ENCODE measurements at regions of chr17 and their contacts with region 1.

Region 1: DNA sequence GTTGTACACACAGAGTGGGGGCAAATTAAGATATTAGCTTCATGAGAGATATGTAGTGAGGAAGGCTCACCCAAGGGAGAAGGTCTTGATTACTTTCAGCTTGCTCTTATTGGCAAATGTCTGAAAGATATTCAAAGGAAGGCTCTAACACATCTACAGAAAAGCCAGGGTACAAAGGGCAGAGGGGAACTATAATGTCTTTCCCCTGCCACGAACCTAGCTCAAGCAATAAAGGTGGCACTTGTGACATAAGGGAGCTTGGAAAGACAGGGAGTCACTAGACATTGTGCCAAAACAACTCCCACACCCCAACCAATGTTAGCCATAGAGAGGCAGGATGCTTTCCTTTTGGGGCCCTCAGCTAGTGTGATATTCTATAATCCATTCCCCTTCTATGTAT is 52.2 kb upstream of the SOX9 start:
- DNase-seq: no peak
- CTCF ChIP-seq: no peak

Region 2: GRCh38 chr17:71922439-71922838 is 146.2 kb before region 1 on chr17:
- CTCF ChIA-PET with region 1: no interaction called
- POLR2A ChIA-PET with region 1: no interaction called
- DNase-seq: no peak
- CTCF ChIP-seq: no peak

Region 3: DNA sequence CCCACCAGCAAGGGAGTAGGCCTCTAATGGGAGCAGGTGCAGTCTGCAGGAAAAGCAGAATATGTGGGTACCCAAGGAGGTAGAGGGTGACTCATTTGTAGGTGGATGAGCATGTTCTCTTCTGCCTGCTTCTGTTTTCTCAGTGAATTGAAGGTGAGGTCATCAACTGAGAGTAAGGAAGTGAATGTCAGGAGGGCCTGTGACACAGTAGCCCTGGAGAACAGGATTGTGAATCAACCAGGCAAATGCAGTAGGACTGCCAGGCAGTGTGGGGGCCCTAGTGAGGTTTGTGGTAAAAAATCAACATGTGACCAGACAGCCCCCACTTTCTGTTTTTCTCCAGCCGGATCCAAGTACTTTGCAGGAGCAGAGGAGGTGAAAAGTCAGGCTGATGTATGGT is 98.3 kb before region 1 on chr17:
- CTCF ChIA-PET with region 1: no interaction called
- POLR2A ChIA-PET with region 1: no interaction called
- DNase-seq: peak; percentile 20
- CTCF ChIP-seq: no peak

Region 4: DNA sequence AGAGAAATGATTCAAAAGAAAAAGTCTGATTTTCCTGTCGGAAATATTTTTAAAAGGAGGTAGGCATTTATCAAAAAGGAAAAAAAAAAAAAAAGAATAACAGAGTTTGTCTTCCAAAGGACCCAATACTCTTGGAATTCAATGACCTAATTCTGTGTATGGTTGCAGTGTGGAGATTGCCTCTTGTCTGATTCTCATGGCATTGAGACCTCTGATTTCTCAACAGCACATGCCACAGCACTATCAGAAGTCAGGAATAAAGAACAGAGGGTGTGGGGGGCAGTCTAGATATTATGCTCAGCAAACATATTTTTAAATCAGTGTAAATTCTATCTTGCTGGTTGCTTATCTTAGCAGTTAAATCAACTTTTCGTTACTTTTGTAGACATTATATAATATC is 29.2 kb before region 1 on chr17:
- CTCF ChIA-PET with region 1: no interaction called
- POLR2A ChIA-PET with region 1: no interaction called
- DNase-seq: no peak
- CTCF ChIP-seq: no peak

Region 5: GRCh38 chr17:72056727-72057290 is 11.8 kb before region 1 on chr17:
- CTCF ChIA-PET with region 1: interaction called, 12 read pairs
- POLR2A ChIA-PET with region 1: no interaction called
- DNase-seq: no peak
- CTCF ChIP-seq: no peak

Region 6: DNA sequence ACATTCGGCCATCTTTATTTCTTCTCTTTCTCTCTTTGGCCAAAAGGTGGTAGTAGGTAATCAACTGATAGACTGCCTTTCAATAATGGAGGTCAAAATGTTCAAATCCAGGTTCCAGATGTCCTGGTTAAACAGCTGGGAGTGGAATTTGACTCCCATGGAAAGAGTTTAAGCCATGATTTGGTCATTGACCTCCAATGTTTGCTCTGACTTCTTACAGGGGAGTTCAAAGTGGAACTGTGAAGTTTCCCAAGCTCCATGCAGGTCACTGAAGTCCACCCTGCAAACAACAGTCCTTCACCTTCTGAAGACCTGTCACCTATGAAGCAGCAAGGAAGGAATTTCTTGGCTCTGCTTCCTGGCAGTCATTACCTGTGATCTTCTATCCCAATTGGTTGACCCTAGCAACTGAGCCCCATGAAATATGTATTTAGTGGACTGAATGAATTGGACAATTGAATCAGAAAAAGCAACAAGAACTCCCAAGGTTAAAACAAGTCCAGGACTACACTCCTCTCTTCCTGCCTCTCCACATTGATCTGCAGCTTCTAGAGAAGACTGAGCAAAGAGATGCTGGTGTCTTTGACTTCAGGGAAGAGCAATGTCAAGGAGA is 24.2 kb after region 1 on chr17:
- CTCF ChIA-PET with region 1: no interaction called
- POLR2A ChIA-PET with region 1: no interaction called
- DNase-seq: no peak
- CTCF ChIP-seq: no peak